ENCODE measurements at regions of chr6 and their contacts with region 1.

Region 1: GRCh38 chr6:13355043-13355951 is 27.0 kb upstream of the TBC1D7 start:
- DNase-seq: no peak
- ATAC-seq: peak in 3 of 4 donors; percentile 39 to 68 (median 39)
- H3K4me3 ChIP-seq: peak overlapping the region in 1 of 12 donors; percentile 2
- H3K27ac ChIP-seq: peak overlapping the region; percentile 1 to 77 (median 42)
- H3K4me1 ChIP-seq: peaks cover 11 to 57% (median 37%) of the 10 kb centered on the region in 12 donors
- H3K27me3 ChIP-seq: no peaks in the 10 kb centered on the region
- CTCF ChIP-seq: no peak
- POLR2A ChIP-seq: no peak

Region 2: GRCh38 chr6:13407709-13408695 is 52.7 kb after region 1 on chr6:
- intact Hi-C with region 1: loop called in 4 of 10 experiments (anchors 5 to 10 kb)
- DNase-seq: no peak
- ATAC-seq: peak in 3 of 4 donors; percentile 36 to 63 (median 38)
- H3K4me3 ChIP-seq: no peak overlapping the region
- H3K27ac ChIP-seq: peak overlapping the region; percentile 42 to 93 (median 78)
- H3K4me1 ChIP-seq: peaks cover 22 to 96% (median 84%) of the 10 kb centered on the region in 12 donors
- H3K27me3 ChIP-seq: no peaks in the 10 kb centered on the region
- CTCF ChIP-seq: no peak
- POLR2A ChIP-seq: peak in 1 of 2 donors; percentile 17

Region 3: DNA sequence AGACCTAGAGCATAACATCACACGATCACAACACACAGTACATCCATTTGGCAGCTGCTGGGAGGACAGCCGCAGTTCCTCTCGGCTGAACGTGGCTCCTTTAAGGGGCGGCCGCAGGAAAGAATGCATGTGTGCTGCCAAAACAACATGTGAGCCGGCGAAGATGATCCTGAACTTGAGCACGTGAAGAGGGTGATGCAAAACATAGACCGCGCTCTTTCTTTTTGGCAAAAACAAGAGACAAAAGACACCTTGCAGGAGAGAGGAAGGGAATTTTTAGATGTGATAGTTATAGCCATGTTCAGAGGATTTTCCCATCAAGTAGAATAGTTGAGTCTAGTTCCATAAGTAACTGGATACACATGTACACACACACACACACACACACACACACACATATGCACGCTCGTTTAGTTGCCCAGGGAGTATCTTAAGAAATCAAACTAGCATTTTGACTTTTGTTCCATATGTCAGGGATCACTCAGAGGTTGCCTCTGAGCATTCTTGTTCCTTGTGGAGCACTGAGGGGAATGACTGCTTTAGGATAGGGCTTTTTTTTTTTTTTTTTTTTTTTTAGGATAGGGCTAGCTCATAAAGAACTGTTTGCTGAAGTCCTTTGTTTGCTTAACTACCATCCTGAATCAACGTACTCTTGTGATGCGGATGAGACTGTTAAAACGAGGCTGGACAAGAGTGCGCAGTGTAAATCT is 378.0 kb after region 1 on chr6:
- intact Hi-C with region 1: no loop called
- DNase-seq: peak in 4 of 5 donors; percentile 40 to 75 (median 56)
- ATAC-seq: peak; percentile 47 to 89 (median 84)
- H3K4me3 ChIP-seq: peak overlapping the region in 5 of 12 donors; percentile 8 to 40 (median 29)
- H3K27ac ChIP-seq: peak overlapping the region in 1 of 12 donors; percentile 75
- H3K4me1 ChIP-seq: peaks cover 0 to 6% (median 2%) of the 10 kb centered on the region in 12 donors
- H3K27me3 ChIP-seq: no peaks in the 10 kb centered on the region
- CTCF ChIP-seq: no peak
- POLR2A ChIP-seq: no peak

Measured in heart left ventricle (tissue), 16 donors.